ENCODE measurements at regions of chr18 and their contacts with region 1.

Region 1: DNA sequence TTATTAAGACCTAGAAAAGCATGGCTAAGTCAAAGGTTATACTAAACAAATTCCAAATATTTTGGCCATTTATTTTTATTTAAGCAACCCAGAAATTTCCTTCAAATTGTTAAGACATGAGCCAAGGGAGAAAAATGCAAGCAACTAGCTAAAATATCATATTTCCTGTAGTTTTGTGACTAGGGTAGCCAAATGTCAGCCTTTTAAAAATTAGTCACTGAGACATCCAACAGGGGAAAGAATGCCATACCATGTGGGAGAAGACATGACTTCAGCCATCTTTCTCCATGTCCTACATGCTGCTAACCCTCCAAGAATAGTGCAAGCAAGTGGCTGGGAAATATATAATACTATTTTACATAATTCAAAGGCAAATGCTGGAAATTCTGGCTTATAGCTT is 197.9 kb downstream of the DSEL start:
- DNase-seq: no peak
- ATAC-seq: no peak
- H3K4me3 ChIP-seq: no peak overlapping the region
- H3K27ac ChIP-seq: no peak overlapping the region
- H3K4me1 ChIP-seq: no peaks in the 10 kb centered on the region
- H3K27me3 ChIP-seq: no peaks in the 10 kb centered on the region
- CTCF ChIP-seq: no peak

Region 2: DNA sequence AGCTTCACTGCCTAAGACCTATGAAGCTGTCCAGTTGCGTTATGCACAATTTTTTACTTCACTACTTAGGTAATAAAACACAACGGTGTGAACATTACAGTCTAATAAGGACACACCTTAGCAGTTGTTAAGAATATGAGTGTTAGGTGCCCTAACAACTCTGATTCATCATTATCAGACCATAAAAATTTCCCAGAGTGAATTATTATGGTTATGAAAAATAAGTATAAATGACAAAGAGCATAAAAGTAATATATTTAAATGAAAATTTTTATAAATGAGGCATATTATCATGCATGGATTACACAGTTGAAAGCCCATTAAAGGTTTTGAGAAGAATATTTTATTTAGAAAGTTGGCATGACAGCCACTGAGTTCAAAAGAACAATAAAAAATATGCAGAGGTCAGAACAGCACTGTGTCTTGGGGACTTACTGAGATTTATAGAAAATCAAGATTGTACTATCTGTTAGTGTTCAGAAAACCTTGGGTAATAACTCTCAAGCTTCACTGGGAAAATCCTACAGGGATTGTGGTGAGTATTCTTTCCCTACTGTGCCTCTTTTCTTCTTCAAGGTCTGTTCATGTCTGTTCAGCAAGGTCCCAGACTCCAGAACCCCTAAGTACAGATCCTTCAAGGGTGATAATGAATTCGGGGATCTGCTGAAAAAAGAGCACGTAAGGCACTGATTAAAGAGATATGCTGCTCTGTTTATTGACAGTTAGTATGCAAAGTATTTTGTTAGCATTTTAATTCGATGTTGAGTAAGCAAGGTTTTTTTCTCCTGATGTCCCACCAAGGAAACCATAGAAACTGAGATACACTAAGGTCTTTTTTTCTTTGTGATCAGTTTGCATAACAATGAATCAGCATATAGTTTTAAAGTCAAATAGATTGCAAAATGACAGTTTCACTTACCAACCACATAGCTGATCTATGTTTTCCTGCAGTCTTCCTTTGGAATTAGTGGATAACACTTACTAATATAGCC is 52.1 kb before region 1 on chr18:
- intact Hi-C with region 1: no loop called
- DNase-seq: no peak
- ATAC-seq: no peak
- H3K4me3 ChIP-seq: no peak overlapping the region
- H3K27ac ChIP-seq: peak overlapping the region in 3 of 10 donors; percentile 24 to 60 (median 30)
- H3K4me1 ChIP-seq: peaks cover 0 to 20% (median 0%) of the 10 kb centered on the region in 9 donors
- H3K27me3 ChIP-seq: no peaks in the 10 kb centered on the region
- CTCF ChIP-seq: no peak

Region 3: GRCh38 chr18:67367540-67367939 is 48.9 kb after region 1 on chr18:
- intact Hi-C with region 1: loop called in 1 of 10 experiments (anchors 5 kb)
- DNase-seq: no peak
- ATAC-seq: no peak
- H3K4me3 ChIP-seq: no peak overlapping the region
- H3K27ac ChIP-seq: no peak overlapping the region
- H3K4me1 ChIP-seq: no peaks in the 10 kb centered on the region
- H3K27me3 ChIP-seq: no peaks in the 10 kb centered on the region
- CTCF ChIP-seq: no peak

Region 4: DNA sequence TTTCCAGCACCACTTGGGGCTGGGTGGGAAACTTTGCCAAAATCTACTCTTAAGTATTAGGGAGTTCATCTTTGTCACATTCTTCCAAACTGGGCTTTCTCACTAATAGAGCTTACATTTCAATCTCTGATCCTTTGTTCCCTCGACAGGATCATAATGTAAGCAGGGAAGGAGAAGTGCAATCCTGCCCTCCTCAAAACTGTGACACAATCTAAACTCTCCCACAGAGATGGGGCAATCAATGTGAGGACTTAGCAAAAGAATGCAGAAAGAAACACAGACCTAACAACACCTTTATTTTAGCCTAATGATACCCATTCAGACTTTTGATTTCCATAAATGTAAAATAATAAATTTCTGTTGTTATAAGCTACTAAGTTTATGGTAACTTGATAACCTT is 157.0 kb after region 1 on chr18:
- intact Hi-C with region 1: no loop called
- DNase-seq: no peak
- ATAC-seq: no peak
- H3K4me3 ChIP-seq: no peak overlapping the region
- H3K27ac ChIP-seq: no peak overlapping the region
- H3K4me1 ChIP-seq: no peaks in the 10 kb centered on the region
- H3K27me3 ChIP-seq: no peaks in the 10 kb centered on the region
- CTCF ChIP-seq: no peak